ENCODE measurements at regions of chr14 and their contacts with region 1.

Region 1: GRCh38 chr14:22026527-22026926 is 352.9 kb upstream of the OR4E1 start:
- DNase-seq: no peak
- ATAC-seq: peak; percentile 36
- H3K4me3 ChIP-seq: no peak overlapping the region
- H3K27ac ChIP-seq: no peak overlapping the region
- H3K4me1 ChIP-seq: no peaks in the 10 kb centered on the region
- H3K27me3 ChIP-seq: peaks cover 0 to 5% of the 10 kb centered on the region in 2 experiments; a peak in 3 of 5 replicates
- CTCF ChIP-seq: no peak
- EP300 ChIP-seq: no peak
- POLR2A ChIP-seq: no peak
- RAD21 ChIP-seq: no peak

Region 2: GRCh38 chr14:21612324-21612723 is 414.2 kb before region 1 on chr14:
- CTCF ChIA-PET with region 1: no interaction called
- POLR2A ChIA-PET with region 1: no interaction called
- in situ Hi-C with region 1: no loop called
- intact Hi-C with region 1: no loop called
- DNase-seq: no peak
- ATAC-seq: peak; percentile 54
- H3K4me3 ChIP-seq: no peak overlapping the region
- H3K27ac ChIP-seq: no peak overlapping the region
- H3K4me1 ChIP-seq: no peaks in the 10 kb centered on the region
- H3K27me3 ChIP-seq: 0 out of 5 replicates have a peak, but pooled peaks cover 0 to 12% of the 10 kb centered on the region in 2 experiments
- CTCF ChIP-seq: 0 out of 2 replicates have a peak, but pooled peaks have one; percentile 18
- EP300 ChIP-seq: no peak
- POLR2A ChIP-seq: no peak
- RAD21 ChIP-seq: no peak

Region 3: GRCh38 chr14:21631038-21631437 is 395.5 kb before region 1 on chr14:
- CTCF ChIA-PET with region 1: no interaction called
- POLR2A ChIA-PET with region 1: no interaction called
- in situ Hi-C with region 1: no loop called
- intact Hi-C with region 1: no loop called
- DNase-seq: no peak
- ATAC-seq: peak; percentile 56; the same call in 1 of the 3 replicates
- H3K4me3 ChIP-seq: no peak overlapping the region
- H3K27ac ChIP-seq: no peak overlapping the region
- H3K4me1 ChIP-seq: no peaks in the 10 kb centered on the region
- H3K27me3 ChIP-seq: 0 out of 5 replicates have a peak, but pooled peaks cover 0 to 7% of the 10 kb centered on the region in 2 experiments
- CTCF ChIP-seq: no peak
- EP300 ChIP-seq: no peak
- POLR2A ChIP-seq: no peak
- RAD21 ChIP-seq: no peak

Region 4: DNA sequence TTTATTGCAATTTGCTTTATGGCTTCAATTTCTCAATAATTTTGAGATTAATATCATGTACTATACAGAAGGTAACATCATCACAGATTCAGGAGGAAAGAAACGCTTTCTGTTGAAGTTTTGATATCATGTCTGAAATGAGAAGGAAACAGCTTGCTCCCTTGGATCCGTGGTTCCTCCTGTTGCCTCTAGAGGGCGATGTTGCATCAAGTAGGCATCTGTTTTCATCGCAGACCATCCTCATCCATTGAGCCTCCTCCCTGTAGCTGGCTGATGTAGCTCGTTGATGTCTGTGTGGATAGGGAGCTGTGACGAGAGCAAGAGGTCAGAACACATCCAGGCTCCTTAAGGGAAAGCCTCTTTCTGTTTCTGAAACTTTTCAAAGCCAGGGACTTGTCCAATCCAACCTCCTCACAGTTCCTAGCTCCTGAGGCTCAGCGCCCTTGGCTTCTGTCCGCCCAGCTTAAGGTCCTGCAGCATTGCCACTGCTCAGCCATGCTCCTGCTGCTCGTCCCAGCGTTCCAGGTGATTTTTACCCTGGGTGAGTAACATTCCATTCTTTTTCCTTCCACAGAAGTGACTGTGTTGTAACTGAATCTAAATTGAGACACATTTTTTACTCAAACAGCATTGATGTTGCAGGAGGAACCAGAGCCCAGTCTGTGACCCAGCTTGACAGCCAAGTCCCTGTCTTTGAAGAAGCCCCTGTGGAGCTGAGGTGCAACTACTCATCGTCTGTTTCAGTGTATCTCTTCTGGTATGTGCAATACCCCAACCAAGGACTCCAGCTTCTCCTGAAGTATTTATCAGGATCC is 48.1 kb before region 1 on chr14:
- CTCF ChIA-PET with region 1: no interaction called
- POLR2A ChIA-PET with region 1: no interaction called
- in situ Hi-C with region 1: no loop called
- intact Hi-C with region 1: loop called (anchors 2 kb)
- DNase-seq: peak; percentile 55
- ATAC-seq: peak; percentile 93
- H3K4me3 ChIP-seq: no peak overlapping the region
- H3K27ac ChIP-seq: no peak overlapping the region
- H3K4me1 ChIP-seq: no peaks in the 10 kb centered on the region
- H3K27me3 ChIP-seq: no peaks in the 10 kb centered on the region
- CTCF ChIP-seq: peak; percentile 84
- EP300 ChIP-seq: no peak
- POLR2A ChIP-seq: no peak
- RAD21 ChIP-seq: no peak

Region 5: GRCh38 chr14:22059201-22059600 is 32.7 kb after region 1 on chr14:
- CTCF ChIA-PET with region 1: no interaction called
- POLR2A ChIA-PET with region 1: no interaction called
- in situ Hi-C with region 1: no loop called
- intact Hi-C with region 1: no loop called
- DNase-seq: no peak
- ATAC-seq: no peak
- H3K4me3 ChIP-seq: no peak overlapping the region
- H3K27ac ChIP-seq: no peak overlapping the region
- H3K4me1 ChIP-seq: no peaks in the 10 kb centered on the region
- H3K27me3 ChIP-seq: no peaks in the 10 kb centered on the region
- CTCF ChIP-seq: no peak
- EP300 ChIP-seq: no peak
- POLR2A ChIP-seq: no peak
- RAD21 ChIP-seq: no peak

Measured in HepG2 (cell line).